Activated CD4-positive, alpha-beta memory T cell treated with anti-CD3 and anti-CD28 coated beads, Interleukin-2, amount 10 ng/mL, durations not matched to agents 7 days and 5 days (primary cell): ENCODE measurements at regions of chr7 and their contacts with region 1.

Region 1: DNA sequence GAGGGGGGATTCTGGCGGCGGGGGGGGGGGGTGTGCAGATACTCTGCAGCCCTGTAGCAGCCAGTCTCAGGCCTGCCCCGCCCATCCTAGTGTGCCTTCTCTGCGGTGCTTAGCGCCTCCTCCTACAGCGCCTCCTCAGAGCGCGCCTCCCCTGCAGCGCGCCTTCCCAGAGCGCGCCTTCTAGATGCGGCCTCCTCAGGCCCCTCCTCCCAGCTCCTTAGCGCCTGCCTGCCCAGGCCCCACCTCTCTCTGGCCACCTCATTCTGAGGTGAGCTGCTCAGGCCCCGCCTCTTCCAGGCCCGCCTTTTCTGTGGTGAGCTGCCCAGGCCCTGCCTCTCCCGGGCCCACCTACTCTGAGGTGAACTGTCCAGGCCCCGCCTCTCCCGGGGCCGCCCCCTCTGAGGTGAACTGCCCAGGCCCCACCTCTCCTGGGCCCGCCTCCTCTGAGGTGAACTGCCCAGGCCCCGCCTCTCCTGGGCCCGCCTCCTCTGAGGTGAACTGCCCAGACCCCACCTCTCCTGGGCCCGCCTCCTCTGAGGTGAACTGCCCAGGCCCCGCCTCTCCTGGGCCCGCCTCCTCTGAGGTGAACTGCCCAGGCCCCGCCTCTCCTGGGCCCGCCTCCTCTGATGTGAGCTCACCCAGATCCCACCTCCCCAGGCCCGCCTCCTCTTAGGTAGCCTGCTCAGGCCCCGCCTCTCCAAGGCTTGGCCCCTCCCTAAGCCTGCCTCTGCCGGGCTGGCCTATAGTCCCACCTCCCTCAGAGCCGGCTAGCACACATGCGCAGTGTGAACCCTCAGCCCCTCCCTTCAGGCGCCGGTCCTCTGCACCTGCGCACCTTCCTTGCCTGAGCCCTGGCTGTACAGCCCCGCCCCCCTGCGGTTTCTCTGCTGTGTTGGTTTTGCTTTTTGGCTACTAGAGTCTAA is 2.1 kb upstream of the SGCE start:
- DNase-seq: peak; percentile 93
- H3K4me3 Mint-ChIP-seq: peak overlapping the region; percentile 84
- H3K27ac Mint-ChIP-seq: no peak overlapping the region
- H3K4me1 Mint-ChIP-seq: peaks cover 23% of the 10 kb centered on the region
- H3K27me3 Mint-ChIP-seq: peaks cover 24% of the 10 kb centered on the region

Region 2: GRCh38 chr7:94449148-94449725 is 208.8 kb before region 1 on chr7:
- CTCF ChIA-PET with region 1: interaction called, 17 read pairs
- POLR2A ChIA-PET with region 1: interaction called, 3 read pairs
- DNase-seq: no peak
- H3K4me3 Mint-ChIP-seq: no peak overlapping the region
- H3K27ac Mint-ChIP-seq: no peak overlapping the region
- H3K4me1 Mint-ChIP-seq: no peaks in the 10 kb centered on the region
- H3K27me3 Mint-ChIP-seq: peaks cover 10% of the 10 kb centered on the region

Region 3: GRCh38 chr7:94679358-94679757 is 21.3 kb after region 1 on chr7:
- CTCF ChIA-PET with region 1: no interaction called
- POLR2A ChIA-PET with region 1: no interaction called
- DNase-seq: no peak
- H3K4me3 Mint-ChIP-seq: no peak overlapping the region
- H3K27ac Mint-ChIP-seq: no peak overlapping the region
- H3K4me1 Mint-ChIP-seq: no peaks in the 10 kb centered on the region
- H3K27me3 Mint-ChIP-seq: peaks cover 3% of the 10 kb centered on the region